Activated naive CD4-positive, alpha-beta T cell treated with anti-CD3 and anti-CD28 coated beads for 36 hours (primary cell): ENCODE measurements at regions of chr18 and their contacts with region 1.

Region 1: GRCh38 chr18:59402432-59403090 is 43.5 kb upstream of the LMAN1 start:
- DNase-seq: peak; percentile 85
- H3K4me3 Mint-ChIP-seq: no peak overlapping the region
- H3K27ac Mint-ChIP-seq: no peak overlapping the region
- H3K4me1 Mint-ChIP-seq: peaks cover 5% of the 10 kb centered on the region
- H3K27me3 Mint-ChIP-seq: no peaks in the 10 kb centered on the region

Region 2: GRCh38 chr18:58970943-58971790 is 431.4 kb before region 1 on chr18:
- CTCF ChIA-PET with region 1: no interaction called
- intact Hi-C with region 1: no loop called
- DNase-seq: no peak
- H3K4me3 Mint-ChIP-seq: no peak overlapping the region
- H3K27ac Mint-ChIP-seq: no peak overlapping the region
- H3K4me1 Mint-ChIP-seq: no peaks in the 10 kb centered on the region
- H3K27me3 Mint-ChIP-seq: peaks cover 12% of the 10 kb centered on the region

Region 3: DNA sequence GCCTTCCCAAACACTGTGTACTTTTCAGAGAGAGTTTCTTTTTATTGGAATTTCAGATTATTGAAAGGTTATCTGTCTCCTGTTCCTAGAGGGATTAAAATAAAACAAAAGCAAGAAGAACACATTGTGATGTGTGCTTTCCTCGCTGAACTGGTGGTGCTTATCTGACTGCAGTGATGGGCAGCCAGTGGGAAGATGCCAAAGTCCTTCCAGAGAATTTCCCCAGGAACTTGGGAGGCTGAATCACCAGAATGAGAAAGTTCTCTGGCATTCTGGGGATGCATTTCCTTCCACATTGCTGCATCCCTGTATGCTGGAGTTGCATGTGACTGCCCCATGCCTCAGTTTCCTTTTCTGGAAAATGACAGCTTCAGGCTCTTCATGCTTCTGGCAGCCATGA is 316.8 kb before region 1 on chr18:
- CTCF ChIA-PET with region 1: interaction called, 10 read pairs
- intact Hi-C with region 1: loop called (anchors 2 kb)
- DNase-seq: no peak
- H3K4me3 Mint-ChIP-seq: no peak overlapping the region
- H3K27ac Mint-ChIP-seq: no peak overlapping the region
- H3K4me1 Mint-ChIP-seq: peaks cover 12% of the 10 kb centered on the region
- H3K27me3 Mint-ChIP-seq: peaks cover 23% of the 10 kb centered on the region

Region 4: DNA sequence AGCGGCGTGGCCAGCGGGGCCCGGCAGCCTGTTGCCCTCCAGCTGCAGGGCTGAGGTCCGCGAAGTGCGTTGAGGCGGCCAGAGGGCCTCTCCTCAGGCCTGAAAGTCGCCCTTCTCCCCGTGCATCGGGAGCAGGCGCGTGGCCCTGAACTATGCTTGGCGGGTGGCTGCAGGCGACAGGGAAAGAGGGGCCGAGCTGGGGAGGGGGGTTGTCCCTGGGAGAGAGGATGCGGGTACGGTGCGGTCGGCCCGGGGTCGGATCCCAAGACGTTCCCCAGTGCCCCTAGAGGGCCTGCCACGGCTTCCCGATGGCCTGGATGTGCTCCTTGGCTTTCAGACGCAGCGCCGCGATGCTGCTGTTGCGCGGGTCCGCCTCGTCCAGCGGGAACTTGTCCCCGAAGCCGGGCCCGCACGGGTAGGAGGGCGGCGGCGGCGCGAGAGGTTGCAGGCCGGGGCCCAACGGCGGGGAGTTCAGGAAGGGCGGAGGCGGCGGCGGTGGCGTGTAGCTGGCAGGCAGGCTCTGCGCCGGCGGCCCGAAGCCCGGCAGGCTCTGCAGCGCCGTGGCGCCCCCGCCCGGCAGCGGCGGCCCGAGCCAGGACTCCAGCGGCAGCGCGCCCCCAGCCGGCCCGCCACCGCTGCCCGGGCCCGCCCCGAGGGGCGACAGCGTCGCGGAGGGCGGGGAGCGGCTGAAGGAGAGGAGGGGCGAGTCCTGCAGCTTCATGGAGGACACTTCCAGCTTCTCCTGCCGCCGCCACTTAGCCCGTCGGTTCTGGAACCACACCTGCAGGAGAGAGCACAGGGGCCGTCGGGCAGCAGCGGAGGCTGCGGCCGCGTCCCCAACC is 133.6 kb before region 1 on chr18:
- CTCF ChIA-PET with region 1: interaction called, 5 read pairs
- intact Hi-C with region 1: loop called (anchors 5 kb)
- DNase-seq: peak; percentile 68
- H3K4me3 Mint-ChIP-seq: peak overlapping the region; percentile 39
- H3K27ac Mint-ChIP-seq: no peak overlapping the region
- H3K4me1 Mint-ChIP-seq: peaks cover 29% of the 10 kb centered on the region
- H3K27me3 Mint-ChIP-seq: peaks cover 81% of the 10 kb centered on the region

Region 5: GRCh38 chr18:59308248-59308937 is 94.2 kb before region 1 on chr18:
- CTCF ChIA-PET with region 1: interaction called, 162 read pairs
- intact Hi-C with region 1: loop called (anchors 2 kb)
- DNase-seq: peak; percentile 67
- H3K4me3 Mint-ChIP-seq: peak overlapping the region; percentile 48
- H3K27ac Mint-ChIP-seq: no peak overlapping the region
- H3K4me1 Mint-ChIP-seq: no peaks in the 10 kb centered on the region
- H3K27me3 Mint-ChIP-seq: peaks cover 29% of the 10 kb centered on the region

Region 6: GRCh38 chr18:59340817-59341216 is 61.7 kb before region 1 on chr18:
- CTCF ChIA-PET with region 1: interaction called, 16 read pairs
- intact Hi-C with region 1: no loop called
- DNase-seq: no peak
- H3K4me3 Mint-ChIP-seq: no peak overlapping the region
- H3K27ac Mint-ChIP-seq: peak overlapping the region; percentile 25
- H3K4me1 Mint-ChIP-seq: peaks cover 48% of the 10 kb centered on the region
- H3K27me3 Mint-ChIP-seq: no peaks in the 10 kb centered on the region

Region 7: GRCh38 chr18:59358712-59359575 is 43.6 kb before region 1 on chr18 and contains the start of gene LMAN1:
- CTCF ChIA-PET with region 1: interaction called, 12 read pairs
- intact Hi-C with region 1: loop called (anchors 5 kb)
- DNase-seq: peak; percentile 96
- H3K4me3 Mint-ChIP-seq: peak within 1 kb of the TSS; percentile 98
- H3K27ac Mint-ChIP-seq: peak within 1 kb of the TSS; percentile 98
- H3K4me1 Mint-ChIP-seq: peaks cover 36% of the 10 kb centered on the region
- H3K27me3 Mint-ChIP-seq: no peaks in the 10 kb centered on the region
- total RNA-seq, gene LMAN1: 146 to 151 TPM